PC-3 (cell line): ENCODE measurements at regions of chrX and their contacts with region 1.

Region 1: GRCh38 chrX:123960042-123960611 is 1.4 kb upstream of the STAG2 start:
- DNase-seq: peak; percentile 93
- ATAC-seq: peak; percentile 60
- H3K4me3 ChIP-seq: peak overlapping the region; percentile 91
- H3K27ac ChIP-seq: peak overlapping the region; percentile 96
- H3K4me1 ChIP-seq: peaks cover 22% of the 10 kb centered on the region
- H3K27me3 ChIP-seq: no peaks in the 10 kb centered on the region
- CTCF ChIP-seq: peak; percentile 53

Region 2: DNA sequence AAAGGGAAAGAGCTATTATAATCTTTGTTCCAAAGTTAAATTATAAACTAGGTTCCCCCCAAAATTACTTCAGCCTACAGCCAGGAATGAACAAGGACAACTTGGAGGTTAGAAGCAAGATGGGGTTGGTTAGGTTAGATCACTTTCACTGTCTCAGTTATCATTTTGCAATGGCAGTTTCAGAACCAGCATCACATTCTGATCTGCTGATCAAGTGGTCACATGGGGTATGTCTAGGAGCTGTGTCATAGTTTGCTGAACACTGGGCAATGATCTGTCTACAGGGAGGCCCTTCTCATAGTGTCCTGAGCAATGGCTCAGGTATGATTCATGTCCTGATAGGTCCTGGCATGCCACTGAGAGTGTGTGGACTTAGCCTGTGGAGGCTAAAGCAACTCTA is 141.9 kb before region 1 on chrX:
- CTCF ChIA-PET with region 1: no interaction called
- POLR2A ChIA-PET with region 1: no interaction called
- intact Hi-C with region 1: no loop called
- DNase-seq: peak; percentile 89
- ATAC-seq: peak; percentile 94
- H3K4me3 ChIP-seq: no peak overlapping the region
- H3K27ac ChIP-seq: peak overlapping the region; percentile 79
- H3K4me1 ChIP-seq: peaks cover 27% of the 10 kb centered on the region
- H3K27me3 ChIP-seq: no peaks in the 10 kb centered on the region
- CTCF ChIP-seq: no peak

Region 3: GRCh38 chrX:123833387-123833786 is 126.7 kb before region 1 on chrX:
- CTCF ChIA-PET with region 1: interaction called, 3 read pairs
- POLR2A ChIA-PET with region 1: no interaction called
- intact Hi-C with region 1: loop called (anchors 2 kb)
- DNase-seq: peak; percentile 83
- ATAC-seq: peak; percentile 80
- H3K4me3 ChIP-seq: no peak overlapping the region; the same call in 1 of the 2 replicates
- H3K27ac ChIP-seq: no peak overlapping the region
- H3K4me1 ChIP-seq: peaks cover 14% of the 10 kb centered on the region
- H3K27me3 ChIP-seq: no peaks in the 10 kb centered on the region
- CTCF ChIP-seq: peak; percentile 80

Region 4: DNA sequence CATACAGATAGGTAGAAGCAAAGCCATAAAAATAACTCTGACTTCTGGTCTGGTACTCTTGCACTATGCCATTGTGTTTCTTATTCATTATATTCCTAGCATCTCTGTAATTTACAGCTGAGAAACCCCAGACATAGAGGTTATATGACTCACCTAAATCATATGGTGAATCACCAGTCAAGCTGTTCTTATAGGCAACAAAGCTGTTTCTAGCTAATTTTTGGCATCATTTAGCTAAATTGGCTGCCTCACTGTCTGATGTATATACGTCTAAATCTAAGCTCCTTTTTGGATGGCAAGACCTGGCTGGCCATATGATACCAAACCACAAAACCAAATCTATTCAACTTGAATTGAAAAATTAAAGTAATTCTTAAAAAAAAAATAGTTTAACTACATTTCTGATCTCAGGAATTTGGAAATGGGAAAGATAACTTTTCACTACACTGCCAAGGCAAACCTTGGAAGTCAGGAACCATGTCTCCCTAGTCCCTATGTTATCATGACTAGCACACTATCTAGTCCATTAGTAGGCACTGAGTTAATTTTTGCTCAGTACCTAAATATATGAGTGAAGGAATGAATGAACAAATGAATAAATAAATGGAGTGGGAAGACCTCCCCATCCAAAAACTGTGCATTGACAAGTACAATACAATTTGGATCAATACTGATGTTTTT is 39.9 kb before region 1 on chrX:
- CTCF ChIA-PET with region 1: no interaction called
- POLR2A ChIA-PET with region 1: no interaction called
- intact Hi-C with region 1: loop called (anchors 5 kb)
- DNase-seq: peak; percentile 75
- ATAC-seq: peak; percentile 90
- H3K4me3 ChIP-seq: no peak overlapping the region
- H3K27ac ChIP-seq: no peak overlapping the region
- H3K4me1 ChIP-seq: peaks cover 27% of the 10 kb centered on the region
- H3K27me3 ChIP-seq: no peaks in the 10 kb centered on the region
- CTCF ChIP-seq: no peak

Region 5: GRCh38 chrX:123993904-123994635 is 33.9 kb after region 1 on chrX:
- CTCF ChIA-PET with region 1: no interaction called
- POLR2A ChIA-PET with region 1: no interaction called
- intact Hi-C with region 1: no loop called
- DNase-seq: no peak
- ATAC-seq: no peak
- H3K4me3 ChIP-seq: no peak overlapping the region
- H3K27ac ChIP-seq: peak overlapping the region; percentile 29
- H3K4me1 ChIP-seq: peaks cover 21% of the 10 kb centered on the region
- H3K27me3 ChIP-seq: no peaks in the 10 kb centered on the region
- CTCF ChIP-seq: no peak

Region 6: GRCh38 chrX:124005228-124005627 is 45.1 kb after region 1 on chrX:
- CTCF ChIA-PET with region 1: no interaction called
- POLR2A ChIA-PET with region 1: no interaction called
- intact Hi-C with region 1: no loop called
- DNase-seq: no peak
- ATAC-seq: no peak
- H3K4me3 ChIP-seq: no peak overlapping the region
- H3K27ac ChIP-seq: no peak overlapping the region
- H3K4me1 ChIP-seq: peaks cover 15% of the 10 kb centered on the region; the same call in 1 of the 2 replicates
- H3K27me3 ChIP-seq: no peaks in the 10 kb centered on the region
- CTCF ChIP-seq: no peak

Region 7: GRCh38 chrX:124023838-124024238 is 63.7 kb after region 1 on chrX:
- CTCF ChIA-PET with region 1: no interaction called
- POLR2A ChIA-PET with region 1: no interaction called
- intact Hi-C with region 1: loop called (anchors 2 kb)
- DNase-seq: no peak
- ATAC-seq: no peak
- H3K4me3 ChIP-seq: no peak overlapping the region
- H3K27ac ChIP-seq: peak overlapping the region; percentile 95
- H3K4me1 ChIP-seq: peaks cover 59% of the 10 kb centered on the region
- H3K27me3 ChIP-seq: no peaks in the 10 kb centered on the region
- CTCF ChIP-seq: no peak

Region 8: DNA sequence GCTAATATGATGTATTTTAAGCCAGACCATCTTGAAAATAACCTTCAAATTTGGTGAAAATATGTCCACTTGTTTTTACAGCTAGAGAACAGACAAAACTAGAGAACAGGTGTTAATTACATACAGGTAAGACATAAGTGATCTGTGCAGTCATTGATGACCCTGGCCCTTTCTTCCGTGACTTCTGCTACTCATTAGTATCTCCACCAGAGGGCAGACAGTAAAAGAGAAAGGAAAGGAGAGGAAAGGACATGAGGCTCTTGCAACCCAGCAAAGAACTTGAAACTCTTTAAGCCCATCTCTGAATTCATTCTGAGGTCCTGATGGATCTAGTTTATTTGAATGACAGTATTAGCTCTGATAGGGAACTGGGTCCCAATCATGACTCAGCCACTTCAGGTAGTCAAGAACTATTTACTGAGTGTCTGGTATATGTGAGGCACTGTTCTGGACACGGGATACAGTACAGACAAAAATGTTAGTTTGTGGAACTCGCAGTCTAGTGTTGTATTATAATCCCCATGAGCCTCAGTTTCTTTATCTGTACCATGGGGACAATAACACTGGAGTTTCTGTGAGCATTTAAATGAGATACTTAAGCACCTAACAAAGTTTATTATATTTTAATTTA is 251.3 kb after region 1 on chrX:
- CTCF ChIA-PET with region 1: no interaction called
- POLR2A ChIA-PET with region 1: no interaction called
- intact Hi-C with region 1: loop called (anchors 2 kb)
- DNase-seq: peak; percentile 65
- ATAC-seq: peak; percentile 58
- H3K4me3 ChIP-seq: no peak overlapping the region
- H3K27ac ChIP-seq: no peak overlapping the region
- H3K4me1 ChIP-seq: peaks cover 23% of the 10 kb centered on the region
- H3K27me3 ChIP-seq: no peaks in the 10 kb centered on the region
- CTCF ChIP-seq: peak; percentile 73